Left colon (tissue), 2 donors: ENCODE measurements at regions of chr4 and their contacts with region 1.

Region 1: GRCh38 chr4:80072744-80073472 is at the start of gene ANTXR2:
- DNase-seq: peak; percentile 91 to 93
- ATAC-seq: peak; percentile 91
- total RNA-seq, gene ANTXR2: 70.0 to 135 TPM

Region 2: DNA sequence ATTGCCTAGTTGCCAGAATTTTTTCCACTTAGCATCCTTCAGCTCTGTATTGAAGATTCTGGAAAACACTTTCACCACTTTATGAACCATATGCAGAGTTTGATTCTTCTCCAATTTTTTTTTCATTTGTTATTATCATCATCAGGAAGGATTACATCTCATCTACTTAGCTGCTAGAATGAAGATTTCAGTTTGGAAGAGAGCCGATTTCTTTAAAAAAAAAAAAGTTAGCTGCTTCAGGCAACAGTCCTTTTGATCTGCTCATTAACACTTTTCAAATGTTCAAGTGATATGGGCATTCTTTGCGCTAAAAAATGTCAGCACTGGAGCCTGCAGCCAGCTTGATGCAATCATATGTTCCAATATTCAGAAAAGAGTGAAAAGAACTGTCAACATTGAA is 76.1 kb before region 1 on chr4:
- intact Hi-C with region 1: no loop called
- DNase-seq: no peak
- ATAC-seq: no peak

Region 3: DNA sequence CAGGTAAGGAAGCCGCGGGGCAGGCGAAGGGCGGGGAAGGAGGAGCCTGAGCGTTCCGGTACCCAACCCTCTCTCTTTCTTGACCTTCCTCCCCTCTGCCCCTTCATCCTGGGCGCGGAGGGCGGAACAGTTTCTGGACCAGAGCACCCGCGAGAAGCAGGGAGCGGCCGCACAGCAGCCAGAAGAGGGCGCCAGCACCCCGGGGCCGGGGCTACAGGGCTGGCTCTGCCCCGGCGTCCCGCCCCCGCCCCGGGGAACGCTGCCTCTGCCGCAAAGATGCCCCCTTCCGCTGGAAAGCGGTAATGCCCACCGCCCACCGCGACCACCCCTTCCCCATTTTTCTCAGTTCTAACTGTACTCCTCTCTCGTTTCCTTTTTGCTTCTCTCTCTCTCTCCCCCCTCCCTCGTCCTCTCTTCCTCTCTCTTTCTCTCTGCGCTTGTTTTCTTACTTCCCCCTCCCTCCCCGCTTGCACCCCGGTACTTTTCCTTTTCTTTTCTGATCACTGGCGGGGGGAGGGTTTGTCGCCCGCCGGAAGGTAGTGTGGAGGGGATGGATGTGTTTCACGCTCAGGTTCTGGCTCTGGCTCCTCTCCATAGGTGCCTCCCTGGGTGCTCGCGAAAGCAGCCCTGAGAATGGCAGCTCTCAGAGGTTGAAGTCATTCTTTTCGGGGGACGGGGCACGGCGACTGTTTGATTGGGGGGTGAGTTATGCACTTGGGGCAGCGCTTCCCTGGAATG is 111.3 kb after region 1 on chr4:
- intact Hi-C with region 1: loop called in 1 of 2 experiments (anchors 10 kb)
- DNase-seq: peak; percentile 82 to 91
- ATAC-seq: peak; percentile 97